ENCODE measurements at regions of chr7 and their contacts with region 1.

Region 1: DNA sequence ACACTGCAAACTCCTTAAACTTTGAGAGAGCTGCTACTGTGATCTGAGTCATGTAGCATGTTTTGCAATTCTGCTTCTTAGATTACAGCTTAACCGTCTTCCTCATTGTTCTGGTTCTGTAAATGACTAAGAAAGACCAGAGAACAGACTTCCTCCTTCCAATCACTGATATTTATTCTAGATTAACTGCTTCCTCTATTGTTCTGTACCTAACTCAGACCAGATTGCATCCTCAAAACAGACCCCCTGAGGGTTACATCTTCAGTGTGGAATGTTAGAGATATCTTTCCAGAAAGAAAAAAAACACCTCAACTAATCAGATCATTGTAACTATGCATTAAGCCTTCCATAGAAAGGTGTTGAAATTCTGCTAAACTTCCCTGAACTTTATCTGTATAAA is 5.7 kb upstream of the PIP start:
- DNase-seq: no peak
- H3K4me3 Mint-ChIP-seq: no peak overlapping the region
- H3K27ac Mint-ChIP-seq: peak overlapping the region; percentile 27
- H3K4me1 Mint-ChIP-seq: peaks cover 32% of the 10 kb centered on the region
- H3K27me3 Mint-ChIP-seq: peaks cover 12% of the 10 kb centered on the region
- CTCF ChIP-seq: no peak

Region 2: GRCh38 chr7:143049362-143049761 is 76.8 kb before region 1 on chr7:
- CTCF ChIA-PET with region 1: no interaction called
- intact Hi-C with region 1: no loop called
- DNase-seq: no peak
- H3K4me3 Mint-ChIP-seq: no peak overlapping the region
- H3K27ac Mint-ChIP-seq: no peak overlapping the region
- H3K4me1 Mint-ChIP-seq: no peaks in the 10 kb centered on the region
- H3K27me3 Mint-ChIP-seq: peaks cover 48% of the 10 kb centered on the region
- CTCF ChIP-seq: no peak

Region 3: DNA sequence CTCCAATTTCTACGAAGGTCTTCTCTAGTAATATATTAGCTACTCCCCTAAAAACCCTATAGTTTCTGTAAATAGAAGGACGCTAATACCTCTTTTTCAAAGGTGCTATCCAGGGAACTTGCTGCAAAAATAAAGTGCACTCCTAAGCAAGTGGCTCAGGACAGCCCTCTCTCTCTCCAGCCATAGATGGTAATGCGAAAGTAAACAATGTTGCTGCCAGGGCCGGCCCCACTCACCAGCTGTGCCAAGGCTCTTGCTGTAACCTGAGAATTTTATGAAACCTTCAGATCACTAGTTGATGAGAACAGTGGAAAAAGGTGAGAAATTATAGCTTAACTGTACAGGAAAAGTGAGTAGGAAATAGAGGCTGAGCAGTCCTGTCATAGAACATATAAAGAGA is 46.2 kb after region 1 on chr7:
- CTCF ChIA-PET with region 1: no interaction called
- intact Hi-C with region 1: loop called (anchors 2 kb)
- DNase-seq: peak; percentile 71
- H3K4me3 Mint-ChIP-seq: peak overlapping the region; percentile 47
- H3K27ac Mint-ChIP-seq: no peak overlapping the region
- H3K4me1 Mint-ChIP-seq: peaks cover 23% of the 10 kb centered on the region
- H3K27me3 Mint-ChIP-seq: no peaks in the 10 kb centered on the region
- CTCF ChIP-seq: no peak

Region 4: DNA sequence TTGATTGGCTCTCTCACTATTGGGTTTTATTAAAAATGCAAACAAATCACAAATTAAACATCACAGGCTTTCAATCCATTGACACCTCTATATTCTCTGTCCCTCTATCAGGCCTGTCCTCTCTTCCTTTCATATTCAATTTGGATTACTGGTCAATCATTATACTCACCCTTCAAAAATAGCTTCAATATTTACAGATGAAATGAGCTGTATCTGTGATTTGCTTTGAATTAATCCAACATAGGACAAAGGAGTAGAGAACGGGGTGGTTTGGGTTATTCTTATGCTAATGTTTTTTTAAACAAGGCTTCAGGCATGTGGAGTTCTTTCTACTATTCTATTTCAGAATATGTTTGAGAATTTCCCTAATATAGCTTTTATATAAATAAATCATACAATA is 59.4 kb after region 1 on chr7:
- CTCF ChIA-PET with region 1: no interaction called
- intact Hi-C with region 1: loop called (anchors 1 kb)
- DNase-seq: no peak
- H3K4me3 Mint-ChIP-seq: no peak overlapping the region
- H3K27ac Mint-ChIP-seq: no peak overlapping the region
- H3K4me1 Mint-ChIP-seq: no peaks in the 10 kb centered on the region
- H3K27me3 Mint-ChIP-seq: peaks cover 34% of the 10 kb centered on the region
- CTCF ChIP-seq: no peak